Mammary epithelial cell (primary cell): ENCODE measurements at regions of chr10 and their contacts with region 1.

Region 1: GRCh38 chr10:43396928-43397624 is 11.9 kb downstream of the HNRNPF start:
- DNase-seq: peak; percentile 91
- H3K4me3 ChIP-seq: peak overlapping the region; percentile 56 to 63 (median 57)
- H3K27ac ChIP-seq: peak overlapping the region; percentile 67
- H3K4me1 ChIP-seq: peaks cover 41% of the 10 kb centered on the region
- H3K27me3 ChIP-seq: no peaks in the 10 kb centered on the region
- CTCF ChIP-seq: no peak

Region 2: DNA sequence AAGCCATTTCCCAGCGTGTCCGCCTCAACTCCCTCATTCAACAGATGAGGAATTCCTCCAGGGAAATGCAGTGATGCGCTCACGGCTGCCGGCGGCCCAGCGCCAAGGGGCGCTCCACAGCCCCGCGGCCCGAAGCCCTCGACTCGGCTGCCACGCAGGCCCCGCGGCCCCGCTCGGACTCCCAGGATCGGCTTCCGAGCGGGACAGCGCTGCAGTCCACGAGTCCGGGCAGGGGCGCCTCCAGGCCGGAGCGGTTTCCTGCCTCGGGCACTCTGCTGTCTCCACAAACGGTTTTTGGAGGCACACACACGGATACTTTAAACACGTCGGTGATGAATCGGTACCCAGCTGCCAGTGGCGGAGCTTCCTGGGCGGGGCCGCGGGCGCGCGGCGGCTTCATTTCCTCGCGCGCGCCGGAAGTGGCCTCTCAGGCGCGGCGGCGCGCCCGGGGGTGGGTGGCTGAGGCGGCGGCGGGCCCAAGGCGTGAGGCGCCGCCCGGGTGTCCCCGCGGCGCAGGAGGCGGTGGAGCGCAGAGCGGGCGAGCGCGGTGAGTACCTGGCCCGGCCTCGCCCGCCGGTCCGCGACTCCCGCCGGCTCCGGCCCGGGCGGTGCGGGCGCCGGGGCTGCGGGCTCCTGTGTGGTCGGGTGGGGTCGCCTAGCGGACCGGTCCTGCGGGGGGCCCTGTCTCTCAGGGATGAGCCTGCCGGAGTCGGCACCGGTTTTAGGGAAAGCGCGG is 258.9 kb before region 1 on chr10 and contains the start of gene CSGALNACT2:
- CTCF ChIA-PET with region 1: no interaction called
- dilution Hi-C with region 1: no loop called
- in situ Hi-C with region 1: no loop called
- intact Hi-C with region 1: loop called (anchors 5 kb)
- DNase-seq: peak; percentile 85
- H3K4me3 ChIP-seq: peak within 1 kb of the TSS; percentile 70 to 86 (median 86)
- H3K27ac ChIP-seq: peak within 1 kb of the TSS; percentile 58
- H3K4me1 ChIP-seq: peaks cover 14% of the 10 kb centered on the region
- H3K27me3 ChIP-seq: no peaks in the 10 kb centered on the region
- CTCF ChIP-seq: no peak
- total RNA-seq, gene CSGALNACT2: 13.8 to 24.5 TPM

Region 3: GRCh38 chr10:43221419-43222209 is 175.5 kb before region 1 on chr10:
- CTCF ChIA-PET with region 1: no interaction called
- dilution Hi-C with region 1: no loop called
- in situ Hi-C with region 1: no loop called
- intact Hi-C with region 1: no loop called
- DNase-seq: no peak
- H3K4me3 ChIP-seq: no peak overlapping the region
- H3K27ac ChIP-seq: no peak overlapping the region
- H3K4me1 ChIP-seq: peaks cover 12% of the 10 kb centered on the region
- H3K27me3 ChIP-seq: no peaks in the 10 kb centered on the region
- CTCF ChIP-seq: no peak

Region 4: GRCh38 chr10:43380610-43381222 is 16.4 kb before region 1 on chr10:
- CTCF ChIA-PET with region 1: no interaction called
- dilution Hi-C with region 1: no loop called
- in situ Hi-C with region 1: no loop called
- intact Hi-C with region 1: loop called (anchors 1 kb)
- DNase-seq: no peak
- H3K4me3 ChIP-seq: no peak overlapping the region
- H3K27ac ChIP-seq: no peak overlapping the region
- H3K4me1 ChIP-seq: peaks cover 7% of the 10 kb centered on the region
- H3K27me3 ChIP-seq: no peaks in the 10 kb centered on the region
- CTCF ChIP-seq: peak; percentile 19 to 27

Region 5: DNA sequence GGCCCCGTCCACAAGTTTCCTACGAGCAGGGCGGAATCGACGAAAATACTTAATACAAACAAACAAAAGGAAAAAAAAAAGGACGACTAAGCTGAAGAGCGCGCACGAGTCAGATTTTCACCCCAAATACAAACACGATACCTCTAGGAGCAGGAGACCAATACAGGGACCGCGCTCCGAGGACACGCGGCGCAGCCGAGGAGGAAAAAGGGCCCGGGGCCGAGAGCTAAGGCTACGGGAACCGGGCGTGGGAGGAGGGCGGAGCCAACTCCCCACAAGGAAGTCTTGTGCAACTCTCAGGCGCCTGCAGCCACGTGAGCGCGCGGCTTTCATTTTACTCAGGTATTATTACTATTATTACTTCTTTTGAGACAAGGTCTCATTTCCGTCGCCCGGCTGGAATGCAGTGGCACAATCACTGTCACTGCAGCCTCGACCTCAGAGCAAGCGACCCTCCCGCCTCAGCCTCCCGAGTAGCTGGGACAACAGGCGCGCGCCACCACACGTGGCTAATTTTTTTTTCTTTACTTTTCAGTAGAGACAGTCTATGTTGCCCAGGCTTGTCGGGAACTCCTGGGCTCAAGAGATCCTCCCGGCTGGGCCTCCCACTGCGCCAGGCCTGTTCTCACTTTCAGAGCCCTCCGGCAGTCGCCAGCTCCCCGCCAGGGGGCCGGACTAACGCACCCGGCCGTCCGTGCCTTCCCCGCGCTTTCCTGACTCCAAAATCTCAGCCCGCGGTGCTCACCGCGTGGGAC is 10.7 kb after region 1 on chr10:
- CTCF ChIA-PET with region 1: no interaction called
- dilution Hi-C with region 1: no loop called
- in situ Hi-C with region 1: no loop called
- intact Hi-C with region 1: loop called (anchors 1 kb)
- DNase-seq: peak; percentile 86
- H3K4me3 ChIP-seq: peak overlapping the region; percentile 72 to 93 (median 89)
- H3K27ac ChIP-seq: peak overlapping the region; percentile 97
- H3K4me1 ChIP-seq: peaks cover 28% of the 10 kb centered on the region
- H3K27me3 ChIP-seq: no peaks in the 10 kb centered on the region
- CTCF ChIP-seq: peak; percentile 9 to 53

Region 6: DNA sequence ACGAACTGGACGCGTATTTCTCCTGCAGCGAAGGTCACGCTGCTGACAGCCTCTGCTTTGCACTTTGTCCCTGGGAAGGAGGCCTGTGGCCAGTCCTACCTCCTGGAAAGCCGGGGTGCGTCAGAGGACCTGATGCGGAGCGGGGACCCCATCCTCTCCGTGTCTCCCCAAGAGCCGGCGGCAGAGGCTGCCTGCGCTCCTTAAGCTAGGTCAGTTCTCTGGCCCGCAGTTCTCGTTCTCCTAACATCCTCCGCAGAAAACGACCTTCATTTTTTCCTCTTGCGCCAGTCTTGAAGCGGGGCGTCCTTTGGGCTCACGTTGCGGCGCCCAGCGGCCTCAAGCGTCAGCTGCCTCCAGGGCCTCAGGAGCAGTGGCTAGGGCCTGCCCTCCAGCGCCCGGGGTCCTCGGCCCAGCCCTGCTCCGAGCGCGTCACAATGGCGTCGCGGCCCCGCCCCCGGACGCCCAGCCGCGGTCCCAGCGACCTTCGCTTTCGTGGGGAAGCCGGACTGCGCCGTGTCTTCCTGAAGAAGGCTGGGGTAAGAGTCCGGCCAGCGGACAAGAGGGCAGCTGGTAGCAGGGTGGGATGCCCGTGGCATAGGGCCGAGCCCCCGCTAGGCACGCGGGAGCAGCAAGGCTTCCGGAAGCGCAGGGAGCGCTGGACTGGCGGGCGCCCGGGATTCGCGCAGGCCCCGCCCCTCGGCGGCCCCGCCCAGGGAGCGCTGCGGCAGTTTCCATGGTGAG is 39.5 kb after region 1 on chr10 and contains the start of gene ZNF487:
- CTCF ChIA-PET with region 1: no interaction called
- dilution Hi-C with region 1: no loop called
- in situ Hi-C with region 1: no loop called
- intact Hi-C with region 1: loop called (anchors 5 kb)
- DNase-seq: peak; percentile 90
- H3K4me3 ChIP-seq: peak within 1 kb of the TSS; percentile 75 to 98 (median 79)
- H3K27ac ChIP-seq: peak within 1 kb of the TSS; percentile 97
- H3K4me1 ChIP-seq: no peaks in the 10 kb centered on the region
- H3K27me3 ChIP-seq: no peaks in the 10 kb centered on the region
- CTCF ChIP-seq: no peak
- total RNA-seq, gene ZNF487: 3.2 to 3.8 TPM

Region 7: DNA sequence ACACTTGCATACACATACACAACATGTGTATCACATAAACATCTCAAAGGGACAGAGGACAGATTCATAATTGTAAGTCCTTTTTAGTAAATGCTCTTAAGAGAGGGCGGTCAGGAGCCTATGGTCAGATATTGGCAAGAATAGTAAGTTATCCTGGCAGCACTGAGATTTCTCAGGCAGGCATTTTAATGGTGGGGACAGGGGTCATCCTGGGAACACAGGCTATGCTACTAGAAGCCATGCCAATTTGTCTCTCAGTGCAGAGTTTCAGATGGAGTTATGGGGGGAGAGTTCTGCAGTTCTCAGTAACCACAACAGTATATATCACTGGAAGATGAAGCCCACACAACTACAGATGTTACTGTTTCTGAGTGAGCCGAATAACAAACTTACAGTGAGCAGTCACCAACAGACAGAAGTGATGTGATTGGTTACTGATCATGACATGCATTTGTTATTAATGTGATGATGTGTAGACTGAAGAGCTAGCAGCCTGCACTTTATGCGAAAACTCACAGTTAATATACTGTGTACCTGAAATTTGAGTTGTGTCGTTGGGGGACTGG is 56.3 kb after region 1 on chr10:
- CTCF ChIA-PET with region 1: no interaction called
- dilution Hi-C with region 1: no loop called
- in situ Hi-C with region 1: loop called in 1 of 2 experiments (anchors 5 kb)
- intact Hi-C with region 1: no loop called
- DNase-seq: no peak
- H3K4me3 ChIP-seq: no peak overlapping the region
- H3K27ac ChIP-seq: peak overlapping the region; percentile 65
- H3K4me1 ChIP-seq: peaks cover 37% of the 10 kb centered on the region
- H3K27me3 ChIP-seq: no peaks in the 10 kb centered on the region
- CTCF ChIP-seq: no peak